Activated CD4-positive, alpha-beta T cell treated with anti-CD3 and anti-CD28 coated beads, Interleukin-2, amount 10 ng/mL, durations not matched to agents 24 days and 14 days (primary cell): ENCODE measurements at regions of chr7 and their contacts with region 1.

Region 1: GRCh38 chr7:114085592-114086501 is 167.0 kb upstream of the PPP1R3A start:
- DNase-seq: peak; percentile 78
- H3K4me3 Mint-ChIP-seq: peak overlapping the region; percentile 87
- H3K27ac Mint-ChIP-seq: peak overlapping the region; percentile 72
- H3K4me1 Mint-ChIP-seq: peaks cover 34% of the 10 kb centered on the region
- H3K27me3 Mint-ChIP-seq: peaks cover 77% of the 10 kb centered on the region

Region 2: GRCh38 chr7:114414156-114415063 is 328.6 kb after region 1 on chr7 and contains the start of gene FOXP2:
- intact Hi-C with region 1: loop called (anchors 10 kb)
- DNase-seq: no peak
- H3K4me3 Mint-ChIP-seq: no peak within 1 kb of the TSS
- H3K27ac Mint-ChIP-seq: no peak within 1 kb of the TSS
- H3K4me1 Mint-ChIP-seq: no peaks in the 10 kb centered on the region
- H3K27me3 Mint-ChIP-seq: no peaks in the 10 kb centered on the region
- total RNA-seq, gene FOXP2: 0.02 and 0.05 TPM in 2 replicates

Region 3: GRCh38 chr7:114663502-114663901 is 577.7 kb after region 1 on chr7:
- intact Hi-C with region 1: loop called (anchors 10 kb)
- DNase-seq: no peak
- H3K4me3 Mint-ChIP-seq: no peak overlapping the region
- H3K27ac Mint-ChIP-seq: no peak overlapping the region
- H3K4me1 Mint-ChIP-seq: no peaks in the 10 kb centered on the region
- H3K27me3 Mint-ChIP-seq: no peaks in the 10 kb centered on the region

Region 4: DNA sequence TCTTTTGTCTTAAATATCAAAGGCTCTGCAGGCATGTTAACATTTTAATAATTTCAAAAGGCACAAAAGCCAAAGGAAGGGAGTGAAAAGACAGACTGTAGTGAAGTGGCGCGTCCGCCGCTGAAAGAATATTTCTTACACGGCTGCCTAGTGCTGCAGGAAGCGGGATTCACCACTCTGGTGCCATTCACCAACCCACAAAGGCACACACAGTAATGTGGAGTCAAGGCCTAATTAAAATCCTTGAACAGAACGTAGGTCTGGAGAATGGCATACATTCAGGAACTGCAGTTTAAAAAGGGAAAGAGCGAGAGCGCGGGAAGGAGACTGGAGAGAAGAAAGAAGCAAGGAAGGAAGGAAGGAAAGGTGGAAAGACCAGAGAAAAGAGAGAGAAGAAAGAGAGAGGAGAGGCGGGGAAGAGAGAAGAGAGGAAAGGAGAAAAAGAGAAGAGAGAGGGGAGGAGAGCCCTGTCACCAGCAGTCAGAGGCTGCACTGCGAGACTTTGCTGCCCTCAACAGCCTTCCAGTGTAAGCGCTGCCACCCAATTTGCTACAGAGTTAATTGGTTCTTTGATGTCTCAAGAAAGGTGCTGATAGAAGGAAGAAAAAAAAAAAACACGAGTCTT is 1390.0 kb after region 1 on chr7:
- intact Hi-C with region 1: loop called (anchors 5 kb)
- DNase-seq: no peak
- H3K4me3 Mint-ChIP-seq: no peak overlapping the region
- H3K27ac Mint-ChIP-seq: no peak overlapping the region
- H3K4me1 Mint-ChIP-seq: peaks cover 6% of the 10 kb centered on the region
- H3K27me3 Mint-ChIP-seq: peaks cover 36% of the 10 kb centered on the region

Region 5: GRCh38 chr7:115851291-115851690 is 1765.4 kb after region 1 on chr7:
- intact Hi-C with region 1: loop called (anchors 10 kb)
- DNase-seq: no peak
- H3K4me3 Mint-ChIP-seq: no peak overlapping the region
- H3K27ac Mint-ChIP-seq: no peak overlapping the region
- H3K4me1 Mint-ChIP-seq: no peaks in the 10 kb centered on the region
- H3K27me3 Mint-ChIP-seq: no peaks in the 10 kb centered on the region

Region 6: DNA sequence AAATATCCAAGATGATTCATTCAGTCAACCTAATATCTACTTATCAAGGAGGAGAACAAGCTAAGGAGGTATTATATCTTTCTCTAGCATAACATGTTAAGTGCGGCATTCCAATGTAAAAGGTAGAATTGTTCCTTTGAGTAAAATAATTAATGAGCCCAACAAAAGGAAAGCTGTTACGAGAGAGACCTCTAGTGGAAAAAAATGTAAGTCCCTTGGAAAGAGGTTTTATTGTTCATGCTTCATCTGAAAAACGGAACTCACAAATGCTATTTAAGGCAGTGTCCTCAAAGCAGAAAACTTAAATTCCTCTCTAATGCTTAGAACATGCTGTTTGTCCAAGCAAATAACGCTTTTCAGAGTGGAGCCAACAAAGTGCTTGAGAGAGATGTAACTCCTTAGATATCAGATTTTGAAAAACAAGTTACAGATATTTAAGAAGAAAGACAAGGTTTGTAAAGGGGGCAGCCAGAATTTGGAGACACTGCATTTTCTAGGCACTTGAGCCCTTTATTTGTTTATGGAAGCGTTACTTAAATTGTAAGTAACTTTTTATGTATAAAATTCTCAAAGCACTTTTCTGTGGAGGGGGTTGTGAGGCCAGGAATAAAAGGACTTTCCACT is 1824.8 kb after region 1 on chr7:
- intact Hi-C with region 1: loop called (anchors 5 kb)
- DNase-seq: no peak
- H3K4me3 Mint-ChIP-seq: no peak overlapping the region
- H3K27ac Mint-ChIP-seq: no peak overlapping the region
- H3K4me1 Mint-ChIP-seq: no peaks in the 10 kb centered on the region
- H3K27me3 Mint-ChIP-seq: peaks cover 5% of the 10 kb centered on the region